Ovary (tissue), 10 donors: ENCODE measurements at regions of chr7 and their contacts with region 1.

Region 1: DNA sequence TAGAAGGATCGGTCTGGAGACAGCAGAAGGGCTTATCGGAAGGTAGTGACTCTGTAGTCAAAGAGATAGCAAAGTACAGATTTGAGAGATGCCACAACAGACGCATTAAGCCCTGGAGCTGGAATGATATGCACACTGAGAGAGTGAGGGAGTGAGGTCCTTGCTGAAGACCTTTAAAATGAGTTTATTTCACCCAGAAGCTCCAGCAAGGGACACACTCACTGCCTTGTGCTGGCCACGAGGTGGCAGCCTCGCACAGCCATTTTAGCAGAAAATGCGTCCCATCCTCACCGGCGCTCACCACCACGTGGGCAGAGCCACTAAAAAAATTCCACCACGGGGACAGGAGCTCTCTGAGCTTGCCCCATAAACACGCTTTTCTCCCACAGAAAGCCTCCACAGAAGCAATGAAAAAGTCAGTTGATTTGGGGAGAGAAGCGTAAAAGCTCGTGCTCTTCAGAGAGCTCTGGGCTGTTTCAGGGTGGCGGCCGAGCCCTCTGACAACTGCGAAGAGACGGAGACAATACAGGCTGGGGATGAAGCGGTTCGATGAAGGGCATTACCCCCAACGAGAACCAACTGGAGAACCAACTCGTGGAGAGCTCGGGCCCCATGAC is 163.0 kb upstream of the KLF14 start:
- DNase-seq: peak; percentile 74 to 86 (median 79)
- H3K4me3 ChIP-seq: no peak overlapping the region
- H3K27ac ChIP-seq: peak overlapping the region; percentile 13 to 48
- H3K4me1 ChIP-seq: peaks cover 13% of the 10 kb centered on the region
- H3K27me3 ChIP-seq: no peaks in the 10 kb centered on the region
- CTCF ChIP-seq: peak; percentile 67 to 89 (median 78)
- EP300 ChIP-seq: no peak
- POLR2A ChIP-seq: no peak

Region 2: DNA sequence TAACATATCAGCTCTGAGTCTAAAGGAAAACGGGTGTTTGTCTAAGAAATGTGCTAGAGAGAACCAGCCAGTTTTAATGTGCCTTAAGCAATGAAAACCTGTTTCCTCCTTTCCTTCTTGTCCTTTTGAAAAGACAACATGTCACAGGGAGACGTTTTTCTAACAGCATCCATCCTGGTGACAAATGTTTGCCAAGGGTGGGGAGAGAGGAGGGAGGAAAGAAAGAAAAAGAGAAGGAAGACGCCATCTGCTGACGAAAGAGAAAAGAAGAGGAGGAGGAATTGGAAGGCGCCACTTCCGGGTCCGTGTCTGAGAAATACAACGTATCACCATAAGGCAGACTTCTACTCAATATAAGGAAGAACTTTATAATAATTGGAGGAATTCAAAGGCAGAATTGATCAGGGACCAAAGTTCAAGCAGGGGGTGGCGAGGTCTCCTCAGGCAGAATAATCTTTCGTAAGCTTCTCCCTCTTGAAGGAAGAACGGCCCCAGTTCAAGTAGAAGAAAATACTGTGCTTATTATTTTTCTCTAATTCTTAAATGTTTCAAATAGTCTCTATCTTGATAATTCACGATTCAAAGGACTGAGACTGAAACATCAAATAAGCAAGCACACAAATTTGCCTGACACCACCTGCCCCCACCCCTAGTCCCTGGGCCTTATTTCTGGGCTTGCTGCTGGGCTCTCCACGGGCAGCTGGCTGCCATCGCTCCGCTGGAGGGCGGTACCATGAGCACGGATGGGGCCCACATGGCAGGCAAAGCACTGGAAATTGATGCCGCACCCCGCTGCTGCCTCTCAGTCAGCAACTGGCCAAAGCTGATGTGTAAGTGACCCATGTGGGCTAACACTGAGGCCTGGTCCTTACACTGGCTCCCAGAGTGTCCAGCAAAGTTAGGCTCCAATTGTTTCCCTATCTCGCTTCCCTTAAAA is 110.7 kb after region 1 on chr7:
- intact Hi-C with region 1: loop called (anchors 2 to 10 kb)
- DNase-seq: peak in 4 of 5 donors; percentile 57 to 64 (median 60)
- H3K4me3 ChIP-seq: no peak overlapping the region
- H3K27ac ChIP-seq: peak overlapping the region; percentile 26 to 35
- H3K4me1 ChIP-seq: peaks cover 19% of the 10 kb centered on the region
- H3K27me3 ChIP-seq: no peaks in the 10 kb centered on the region
- CTCF ChIP-seq: peak in 2 of 3 donors; percentile 44 to 58
- EP300 ChIP-seq: no peak
- POLR2A ChIP-seq: no peak

Region 3: DNA sequence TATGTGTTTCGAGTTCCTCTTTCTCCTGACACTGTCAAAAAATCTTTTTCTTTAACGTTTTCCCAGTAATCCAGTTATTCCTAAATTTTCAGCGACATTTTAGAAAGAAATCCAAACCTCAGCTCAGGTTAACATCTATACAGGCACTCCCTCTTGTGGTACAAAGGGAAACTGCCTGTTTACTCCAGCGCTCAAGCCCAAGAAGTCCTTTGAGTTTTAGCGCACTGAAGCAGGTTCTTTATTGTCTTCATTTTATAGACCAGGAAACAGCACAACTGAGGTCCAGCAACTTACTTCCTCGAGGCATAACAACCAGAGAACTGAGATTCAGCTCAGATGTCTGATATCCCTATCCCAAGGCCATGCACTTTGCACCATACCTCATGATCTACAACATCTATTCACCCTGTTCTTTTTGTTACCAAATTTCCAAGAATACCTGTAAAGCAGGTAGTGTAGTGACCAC is 143.5 kb after region 1 on chr7:
- intact Hi-C with region 1: loop called in 2 of 4 experiments (anchors 2 to 5 kb)
- DNase-seq: peak in 2 of 5 donors; percentile 41 to 69
- H3K4me3 ChIP-seq: no peak overlapping the region
- H3K27ac ChIP-seq: peak overlapping the region in 1 of 2 donors; percentile 26
- H3K4me1 ChIP-seq: peaks cover 3% of the 10 kb centered on the region
- H3K27me3 ChIP-seq: no peaks in the 10 kb centered on the region
- CTCF ChIP-seq: peak; percentile 43 to 92 (median 82)
- EP300 ChIP-seq: no peak
- POLR2A ChIP-seq: no peak

Region 4: GRCh38 chr7:131513245-131514061 is 616.4 kb after region 1 on chr7:
- intact Hi-C with region 1: loop called in 1 of 4 experiments (anchors 10 kb)
- DNase-seq: peak; percentile 82 to 89 (median 84)
- H3K4me3 ChIP-seq: no peak overlapping the region
- H3K27ac ChIP-seq: no peak overlapping the region
- H3K4me1 ChIP-seq: no peaks in the 10 kb centered on the region
- H3K27me3 ChIP-seq: no peaks in the 10 kb centered on the region
- CTCF ChIP-seq: peak; percentile 85 to 95 (median 86)
- EP300 ChIP-seq: no peak
- POLR2A ChIP-seq: no peak